ENCODE measurements at regions of chr17 and their contacts with region 1.

Region 1: GRCh38 chr17:56715613-56716357 is 117.9 kb downstream of the C17orf67 start:
- DNase-seq: peak; percentile 76 to 87 (median 84)
- ATAC-seq: peak; percentile 86 to 94
- H3K4me3 ChIP-seq: no peak overlapping the region
- H3K27ac ChIP-seq: no peak overlapping the region
- H3K4me1 ChIP-seq: no peaks in the 10 kb centered on the region
- H3K27me3 ChIP-seq: no peaks in the 10 kb centered on the region

Region 2: DNA sequence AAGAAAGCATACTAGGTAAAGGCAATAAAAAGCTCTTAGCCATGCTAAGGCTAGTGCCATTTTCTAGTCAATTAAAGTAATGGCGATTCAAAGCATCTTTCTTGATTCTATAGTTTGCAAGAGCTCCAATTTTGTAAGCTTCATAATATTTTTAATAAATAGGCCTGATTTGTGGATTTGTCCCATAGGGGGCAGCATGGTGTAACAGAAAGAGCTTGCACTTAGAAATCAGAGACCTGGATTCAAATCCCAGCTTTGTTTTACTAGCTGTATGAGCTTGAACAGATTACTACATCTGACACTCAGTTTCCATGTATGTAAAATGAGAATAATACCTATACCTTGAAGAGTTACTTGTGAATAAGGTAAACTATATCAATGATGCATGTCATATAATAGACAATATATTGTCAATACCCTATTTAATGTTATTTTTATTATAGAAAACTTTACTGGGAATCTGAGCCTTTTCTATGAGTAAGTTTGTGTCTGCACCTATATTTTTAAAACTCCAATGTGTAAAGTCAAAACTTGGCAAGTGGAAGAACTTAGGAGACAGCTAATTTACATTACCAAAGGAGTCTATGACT is 215.9 kb before region 1 on chr17:
- intact Hi-C with region 1: loop called in 2 of 4 experiments (anchors 10 kb)
- DNase-seq: no peak
- ATAC-seq: no peak
- H3K4me3 ChIP-seq: no peak overlapping the region
- H3K27ac ChIP-seq: no peak overlapping the region
- H3K4me1 ChIP-seq: no peaks in the 10 kb centered on the region
- H3K27me3 ChIP-seq: no peaks in the 10 kb centered on the region

Region 3: GRCh38 chr17:56510554-56511342 is 205.0 kb before region 1 on chr17:
- intact Hi-C with region 1: loop called in 3 of 4 experiments (anchors 10 kb)
- DNase-seq: peak in 1 of 3 donors; percentile 52
- ATAC-seq: no peak
- H3K4me3 ChIP-seq: no peak overlapping the region
- H3K27ac ChIP-seq: no peak overlapping the region
- H3K4me1 ChIP-seq: no peaks in the 10 kb centered on the region
- H3K27me3 ChIP-seq: no peaks in the 10 kb centered on the region

Region 4: GRCh38 chr17:56653877-56654276 is 61.9 kb before region 1 on chr17:
- intact Hi-C with region 1: no loop called
- DNase-seq: no peak
- ATAC-seq: no peak
- H3K4me3 ChIP-seq: no peak overlapping the region
- H3K27ac ChIP-seq: no peak overlapping the region
- H3K4me1 ChIP-seq: no peaks in the 10 kb centered on the region
- H3K27me3 ChIP-seq: no peaks in the 10 kb centered on the region

Measured in right cardiac atrium (tissue), 5 donors.